A549 (cell line): ENCODE measurements at regions of chr7 and their contacts with region 1.

Region 1: GRCh38 chr7:151626422-151627115 is 106.9 kb upstream of the RHEB start:
- DNase-seq: peak; percentile 71 to 76
- ATAC-seq: peak; percentile 80 to 91; a peak in 5 of 6 replicates
- H3K4me3 ChIP-seq: no peak overlapping the region
- H3K27ac ChIP-seq: peak overlapping the region in 1 of 2 experiments; percentile 29; a peak in 2 of 6 replicates
- H3K4me1 ChIP-seq: peaks cover 29% of the 10 kb centered on the region
- CTCF ChIP-seq: peak; percentile 75
- EP300 ChIP-seq: no peak
- POLR2A ChIP-seq: no peak
- RAD21 ChIP-seq: peak; percentile 77 to 84

Region 2: GRCh38 chr7:151608031-151608551 is 18.5 kb before region 1 on chr7:
- CTCF ChIA-PET with region 1: interaction called, 20 read pairs
- POLR2A ChIA-PET with region 1: no interaction called
- DNase-seq: peak in 1 of 2 experiments; percentile 18
- ATAC-seq: peak; percentile 54 to 75; a peak in 5 of 6 replicates
- H3K4me3 ChIP-seq: no peak overlapping the region
- H3K27ac ChIP-seq: peak overlapping the region in 1 of 2 experiments; percentile 59; a peak in 3 of 6 replicates
- H3K4me1 ChIP-seq: peaks cover 28% of the 10 kb centered on the region
- CTCF ChIP-seq: no peak; the same call in 2 of the 3 replicates
- EP300 ChIP-seq: no peak
- POLR2A ChIP-seq: no peak
- RAD21 ChIP-seq: peak; percentile 19 to 50; a peak in 2 of 5 replicates

Region 3: GRCh38 chr7:151705636-151706276 is 79.2 kb after region 1 on chr7:
- CTCF ChIA-PET with region 1: interaction called, 44 read pairs
- POLR2A ChIA-PET with region 1: no interaction called
- DNase-seq: peak; percentile 61 to 81
- ATAC-seq: peak; percentile 63 to 88
- H3K4me3 ChIP-seq: no peak overlapping the region
- H3K27ac ChIP-seq: peak overlapping the region; percentile 64 to 80
- H3K4me1 ChIP-seq: peaks cover 27% of the 10 kb centered on the region
- CTCF ChIP-seq: peak; percentile 78
- EP300 ChIP-seq: no peak
- POLR2A ChIP-seq: no peak
- RAD21 ChIP-seq: peak; percentile 74 to 79

Region 4: DNA sequence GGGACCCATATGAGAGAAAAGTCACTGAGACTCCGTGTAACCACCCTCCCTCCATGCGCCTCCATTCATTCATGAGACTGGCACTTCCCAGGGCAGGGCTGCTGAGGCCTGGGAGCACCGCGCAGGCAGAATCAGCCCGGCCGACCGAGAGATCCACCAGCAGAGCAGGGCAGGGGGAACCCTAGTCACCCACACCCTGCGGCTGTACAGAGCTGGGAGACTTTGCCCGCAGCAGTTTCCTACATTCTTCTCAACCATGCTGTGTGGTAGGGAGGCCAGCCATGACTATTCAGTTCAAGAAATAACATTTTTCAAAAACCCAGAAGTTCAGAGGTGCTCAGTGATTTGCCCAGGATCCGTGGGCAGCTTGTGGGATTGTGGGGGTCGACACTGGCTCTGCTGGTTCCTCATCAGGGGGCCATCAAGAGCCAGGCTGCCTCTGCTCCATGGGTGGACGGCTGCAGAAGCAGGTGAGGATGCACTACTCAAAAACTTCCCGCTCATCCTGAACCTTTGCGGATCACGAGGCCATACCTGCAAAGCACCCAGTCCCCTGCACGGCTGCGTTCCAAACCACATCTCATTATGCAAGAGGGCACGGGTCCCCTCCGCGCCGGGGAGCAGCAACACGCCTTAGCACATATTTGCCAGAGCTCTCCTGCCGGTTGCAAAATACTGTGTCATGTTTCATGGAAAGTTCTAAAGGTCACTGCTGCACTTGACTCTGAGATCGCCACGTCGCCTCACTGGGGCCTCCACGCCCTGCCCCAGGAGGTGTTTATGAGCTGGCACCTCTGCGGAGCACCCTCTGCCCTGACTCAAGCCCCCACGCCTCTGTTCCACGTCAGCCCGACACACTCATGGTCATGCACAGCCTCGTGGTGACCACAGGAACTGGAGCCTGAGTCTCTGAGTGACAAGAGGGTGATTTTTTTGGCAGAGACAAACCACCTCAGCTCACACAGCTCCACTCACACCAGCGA is 118.4 kb after region 1 on chr7:
- CTCF ChIA-PET with region 1: interaction called, 51 read pairs
- POLR2A ChIA-PET with region 1: interaction called, 3 read pairs
- DNase-seq: peak; percentile 92 to 93
- ATAC-seq: peak; percentile 92 to 94
- H3K4me3 ChIP-seq: no peak overlapping the region
- H3K27ac ChIP-seq: peak overlapping the region; percentile 87
- H3K4me1 ChIP-seq: peaks cover 64% of the 10 kb centered on the region
- CTCF ChIP-seq: peak; percentile 51
- EP300 ChIP-seq: peak; percentile 84 to 92; a peak in 3 of 5 replicates
- POLR2A ChIP-seq: no peak
- RAD21 ChIP-seq: peak; percentile 52 to 72

Region 5: GRCh38 chr7:151754142-151754590 is 127.6 kb after region 1 on chr7:
- CTCF ChIA-PET with region 1: interaction called, 173 read pairs
- POLR2A ChIA-PET with region 1: interaction called, 6 read pairs
- DNase-seq: peak; percentile 97 to 98
- ATAC-seq: peak; percentile 96 to 98
- H3K4me3 ChIP-seq: no peak overlapping the region
- H3K27ac ChIP-seq: peak overlapping the region; percentile 91 to 96
- H3K4me1 ChIP-seq: peaks cover 41% of the 10 kb centered on the region
- CTCF ChIP-seq: peak; percentile 94
- EP300 ChIP-seq: peak; percentile 73 to 87; a peak in 3 of 5 replicates
- POLR2A ChIP-seq: no peak
- RAD21 ChIP-seq: peak; percentile 77 to 85

Region 6: DNA sequence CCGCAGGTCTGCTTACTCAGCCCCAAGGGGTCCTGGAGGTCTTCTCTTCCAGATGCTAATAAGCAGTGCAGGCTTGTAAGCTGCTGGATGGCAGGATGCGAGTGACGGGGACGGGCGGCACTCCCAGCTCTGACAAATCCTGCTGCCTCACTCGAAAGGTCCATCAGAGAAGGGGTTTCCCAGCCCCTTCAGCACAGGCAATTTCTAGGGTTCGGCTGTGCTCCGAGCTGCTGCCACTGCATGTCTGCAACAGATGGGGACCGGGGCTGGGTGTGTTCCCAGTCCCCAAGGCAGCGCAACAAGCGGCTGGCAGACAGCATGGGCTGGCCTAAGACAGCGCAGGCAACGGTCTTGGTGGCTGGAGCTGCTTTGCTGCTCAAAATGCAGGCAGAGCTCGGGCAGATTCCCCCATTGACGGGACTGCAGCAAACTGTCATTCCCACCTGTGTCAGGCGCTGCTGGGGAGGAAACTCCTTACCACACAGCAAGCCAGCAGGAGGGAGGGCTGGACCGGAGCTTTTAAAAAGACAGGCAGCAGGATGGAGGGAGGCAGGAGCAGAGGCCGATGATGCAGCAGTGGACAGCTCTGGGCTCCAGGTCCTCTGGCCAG is 187.9 kb after region 1 on chr7:
- CTCF ChIA-PET with region 1: no interaction called
- POLR2A ChIA-PET with region 1: no interaction called
- DNase-seq: no peak
- ATAC-seq: peak in 1 of 2 experiments; percentile 42; a peak in 3 of 6 replicates
- H3K4me3 ChIP-seq: no peak overlapping the region
- H3K27ac ChIP-seq: no peak overlapping the region
- H3K4me1 ChIP-seq: peaks cover 8% of the 10 kb centered on the region; the same call in 2 of the 3 replicates
- CTCF ChIP-seq: no peak
- EP300 ChIP-seq: no peak
- POLR2A ChIP-seq: no peak
- RAD21 ChIP-seq: no peak